Mammary epithelial cell (primary cell): ENCODE measurements at regions of chr9 and their contacts with region 1.

Region 1: DNA sequence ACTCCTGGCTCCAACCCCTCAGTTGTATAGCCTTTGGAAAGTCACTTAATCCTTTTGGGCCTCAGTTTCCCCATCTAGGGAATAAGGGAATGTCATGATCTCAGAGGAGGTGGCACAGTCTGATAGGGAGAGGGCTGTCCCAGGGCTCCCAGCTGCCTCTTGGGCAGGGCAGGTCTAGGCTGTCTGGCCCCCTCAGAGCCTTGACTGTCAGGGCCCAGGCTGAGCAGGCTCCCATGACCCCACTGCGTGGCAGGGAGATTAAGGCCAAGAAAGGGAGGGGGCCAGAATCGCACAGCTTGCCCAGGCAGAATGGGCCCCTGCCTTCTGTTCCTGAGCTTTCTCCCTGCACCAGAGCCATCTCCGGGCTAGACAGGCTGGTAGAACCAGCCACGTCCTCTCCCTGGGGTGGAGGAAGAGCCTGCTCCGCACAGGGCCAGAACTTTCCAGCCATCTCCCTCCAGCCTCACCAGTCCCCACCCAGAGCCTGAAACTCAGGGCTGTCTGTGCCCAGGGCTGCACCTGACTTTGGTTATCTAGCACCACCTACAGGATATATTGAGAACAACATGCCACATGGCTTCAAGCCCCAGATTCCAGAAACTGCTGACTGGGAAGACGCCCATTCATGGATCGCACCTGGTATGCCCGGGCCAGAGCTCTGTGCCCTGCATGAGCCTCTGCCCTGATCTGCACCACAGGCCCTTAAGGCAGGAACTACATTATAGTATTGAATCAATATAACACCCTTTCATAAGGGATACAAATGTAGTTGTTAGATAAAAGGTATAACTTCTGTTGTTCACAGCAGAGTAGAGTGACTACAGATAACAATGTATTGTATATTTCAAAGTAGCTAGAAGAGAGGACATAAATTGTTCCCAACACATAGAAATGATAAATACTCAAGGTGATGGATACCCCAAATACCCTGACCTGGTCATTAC is 32.0 kb downstream of the NAIF1 start:
- DNase-seq: peak; percentile 80
- H3K4me3 ChIP-seq: no peak overlapping the region
- H3K27ac ChIP-seq: no peak overlapping the region
- H3K4me1 ChIP-seq: no peaks in the 10 kb centered on the region
- H3K27me3 ChIP-seq: no peaks in the 10 kb centered on the region
- CTCF ChIP-seq: peak; percentile 73 to 82

Region 2: GRCh38 chr9:127910613-127911205 is 124.4 kb before region 1 on chr9:
- CTCF ChIA-PET with region 1: no interaction called
- dilution Hi-C with region 1: no loop called
- in situ Hi-C with region 1: no loop called
- intact Hi-C with region 1: no loop called
- DNase-seq: no peak
- H3K4me3 ChIP-seq: no peak overlapping the region
- H3K27ac ChIP-seq: no peak overlapping the region
- H3K4me1 ChIP-seq: no peaks in the 10 kb centered on the region
- H3K27me3 ChIP-seq: no peaks in the 10 kb centered on the region
- CTCF ChIP-seq: peak in 1 of 2 donors; percentile 45

Region 3: GRCh38 chr9:127937388-127938280 is 97.5 kb before region 1 on chr9 and contains the start of gene DPM2:
- CTCF ChIA-PET with region 1: interaction called, 9 read pairs
- dilution Hi-C with region 1: loop called (anchors 10 kb)
- in situ Hi-C with region 1: loop called in 1 of 2 experiments (anchors 5 kb)
- intact Hi-C with region 1: no loop called
- DNase-seq: peak; percentile 78
- H3K4me3 ChIP-seq: peak within 1 kb of the TSS; percentile 60 to 89 (median 73)
- H3K27ac ChIP-seq: peak within 1 kb of the TSS; percentile 60
- H3K4me1 ChIP-seq: peaks cover 23% of the 10 kb centered on the region
- H3K27me3 ChIP-seq: no peaks in the 10 kb centered on the region
- CTCF ChIP-seq: no peak
- total RNA-seq, gene DPM2: 10.0 to 48.7 TPM

Region 4: GRCh38 chr9:127949827-127950512 is 85.1 kb before region 1 on chr9:
- CTCF ChIA-PET with region 1: no interaction called
- dilution Hi-C with region 1: no loop called
- in situ Hi-C with region 1: loop called in 1 of 2 experiments (anchors 5 kb)
- intact Hi-C with region 1: loop called (anchors 5 kb)
- DNase-seq: no peak
- H3K4me3 ChIP-seq: no peak overlapping the region
- H3K27ac ChIP-seq: no peak overlapping the region
- H3K4me1 ChIP-seq: peaks cover 13% of the 10 kb centered on the region
- H3K27me3 ChIP-seq: no peaks in the 10 kb centered on the region
- CTCF ChIP-seq: no peak

Region 5: GRCh38 chr9:127970401-127971313 is 64.4 kb before region 1 on chr9:
- CTCF ChIA-PET with region 1: no interaction called
- dilution Hi-C with region 1: no loop called
- in situ Hi-C with region 1: no loop called
- intact Hi-C with region 1: no loop called
- DNase-seq: peak; percentile 58
- H3K4me3 ChIP-seq: no peak overlapping the region
- H3K27ac ChIP-seq: no peak overlapping the region
- H3K4me1 ChIP-seq: peaks cover 64% of the 10 kb centered on the region
- H3K27me3 ChIP-seq: no peaks in the 10 kb centered on the region
- CTCF ChIP-seq: no peak

Region 6: GRCh38 chr9:127980706-127981558 is 54.2 kb before region 1 on chr9 and contains the start of gene EEIG1:
- CTCF ChIA-PET with region 1: no interaction called
- dilution Hi-C with region 1: loop called (anchors 10 kb)
- in situ Hi-C with region 1: no loop called
- intact Hi-C with region 1: loop called (anchors 2 kb)
- DNase-seq: peak; percentile 88
- H3K4me3 ChIP-seq: peak within 1 kb of the TSS; percentile 64 to 84 (median 78)
- H3K27ac ChIP-seq: peak within 1 kb of the TSS; percentile 46
- H3K4me1 ChIP-seq: peaks cover 35% of the 10 kb centered on the region
- H3K27me3 ChIP-seq: no peaks in the 10 kb centered on the region
- CTCF ChIP-seq: no peak
- total RNA-seq, gene EEIG1: 23.0 to 29.3 TPM

Region 7: GRCh38 chr9:128117613-128118471 is 82.7 kb after region 1 on chr9:
- CTCF ChIA-PET with region 1: no interaction called
- dilution Hi-C with region 1: no loop called
- in situ Hi-C with region 1: no loop called
- intact Hi-C with region 1: loop called (anchors 1 kb)
- DNase-seq: peak; percentile 76
- H3K4me3 ChIP-seq: no peak overlapping the region
- H3K27ac ChIP-seq: no peak overlapping the region
- H3K4me1 ChIP-seq: no peaks in the 10 kb centered on the region
- H3K27me3 ChIP-seq: no peaks in the 10 kb centered on the region
- CTCF ChIP-seq: peak; percentile 100